IMR-90 (cell line): ENCODE measurements at regions of chr17 and their contacts with region 1.

Region 1: DNA sequence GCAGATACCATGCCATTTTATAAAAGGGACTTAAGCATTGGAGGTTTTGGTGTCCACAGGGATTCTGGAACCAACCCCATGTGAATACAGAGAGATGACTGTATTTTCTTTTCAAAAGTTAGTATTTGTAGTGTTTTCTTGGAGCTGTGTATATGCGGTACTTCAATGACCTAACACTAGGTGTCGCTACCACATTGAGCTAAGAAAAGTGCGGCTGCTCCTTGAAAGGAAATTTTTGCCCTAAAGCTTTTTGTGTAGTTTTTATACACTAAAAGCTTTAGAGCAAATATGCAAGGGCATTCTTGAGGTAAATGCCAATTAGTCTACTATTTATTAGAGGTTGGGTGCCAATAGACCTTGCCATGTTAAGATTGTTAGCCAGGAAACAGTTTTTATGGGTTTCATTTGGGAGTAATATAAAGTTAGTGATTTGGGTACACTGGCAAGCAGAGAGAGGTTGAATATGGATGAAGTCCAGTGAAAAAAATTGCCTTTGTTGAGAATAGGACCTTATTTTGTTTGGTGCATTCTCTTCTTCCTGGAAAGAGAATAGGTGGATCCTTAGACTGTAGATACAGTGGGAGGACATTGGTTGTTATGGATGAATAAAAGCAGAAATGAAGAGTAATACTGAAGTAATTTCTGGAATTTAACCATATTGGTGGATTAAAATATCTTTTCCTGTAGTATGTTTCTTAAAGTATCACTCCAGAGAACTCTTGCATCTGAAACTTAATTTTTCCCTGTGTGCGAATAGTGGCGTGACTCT is 43.3 kb downstream of the BCAS3 start:
- DNase-seq: peak; percentile 81
- ATAC-seq: peak; percentile 90
- H3K4me3 ChIP-seq: no peak overlapping the region
- H3K27ac ChIP-seq: no peak overlapping the region
- H3K4me1 ChIP-seq: peaks cover 3% of the 10 kb centered on the region; the same call in 1 of the 2 replicates
- H3K27me3 ChIP-seq: no peaks in the 10 kb centered on the region
- CTCF ChIP-seq: peak; percentile 86
- POLR2A ChIP-seq: peak; percentile 31; the same call in 1 of the 2 replicates
- RAD21 ChIP-seq: peak; percentile 94

Region 2: DNA sequence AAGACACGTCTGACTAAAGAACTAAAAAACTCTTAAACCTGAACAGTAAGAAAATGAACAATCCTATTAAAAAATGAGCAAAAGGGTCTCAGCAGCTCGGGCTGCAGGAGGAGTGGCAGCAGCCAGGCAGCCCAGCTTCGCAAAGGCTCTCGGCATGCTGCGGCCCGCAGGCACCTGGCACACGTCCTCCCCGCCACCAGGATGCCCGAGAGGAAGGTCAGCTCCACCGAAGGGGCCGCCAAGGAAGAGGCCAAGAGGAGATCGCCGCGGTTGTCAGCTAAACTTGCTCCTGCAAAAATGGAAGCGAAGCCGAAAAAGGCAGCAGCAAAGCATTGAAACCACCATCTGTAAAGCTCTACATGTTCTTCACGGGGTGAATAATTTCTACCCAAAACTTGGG is 130.2 kb after region 1 on chr17:
- CTCF ChIA-PET with region 1: no interaction called
- POLR2A ChIA-PET with region 1: no interaction called
- dilution Hi-C with region 1: no loop called
- in situ Hi-C with region 1: no loop called
- intact Hi-C with region 1: loop called (anchors 10 kb)
- DNase-seq: no peak
- ATAC-seq: no peak
- H3K4me3 ChIP-seq: no peak overlapping the region
- H3K27ac ChIP-seq: no peak overlapping the region
- H3K4me1 ChIP-seq: no peaks in the 10 kb centered on the region
- H3K27me3 ChIP-seq: no peaks in the 10 kb centered on the region
- CTCF ChIP-seq: no peak
- POLR2A ChIP-seq: no peak
- RAD21 ChIP-seq: no peak

Region 3: DNA sequence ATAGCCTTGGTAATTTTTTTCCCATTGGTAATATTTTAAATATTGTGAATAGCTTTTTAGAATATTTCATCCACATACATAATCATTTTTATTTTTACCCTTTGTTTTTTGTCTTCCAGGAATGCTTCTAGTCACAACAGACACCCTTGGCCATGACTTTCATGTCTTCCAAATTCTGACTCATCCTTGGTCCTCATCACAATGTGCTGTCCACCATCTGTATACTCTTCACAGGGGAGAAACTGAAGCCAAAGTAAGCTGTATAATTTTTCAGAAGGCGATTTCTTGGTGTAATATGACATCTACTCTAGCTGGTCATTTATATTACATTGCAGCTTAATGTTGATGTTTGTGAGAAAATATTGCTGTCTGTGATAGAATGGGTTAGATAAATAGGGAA is 226.2 kb after region 1 on chr17:
- CTCF ChIA-PET with region 1: no interaction called
- POLR2A ChIA-PET with region 1: no interaction called
- dilution Hi-C with region 1: no loop called
- in situ Hi-C with region 1: no loop called
- intact Hi-C with region 1: no loop called
- DNase-seq: peak; percentile 86
- ATAC-seq: peak; percentile 75
- H3K4me3 ChIP-seq: no peak overlapping the region
- H3K27ac ChIP-seq: no peak overlapping the region
- H3K4me1 ChIP-seq: peaks cover 3% of the 10 kb centered on the region
- H3K27me3 ChIP-seq: no peaks in the 10 kb centered on the region
- CTCF ChIP-seq: no peak
- POLR2A ChIP-seq: no peak
- RAD21 ChIP-seq: no peak

Region 4: DNA sequence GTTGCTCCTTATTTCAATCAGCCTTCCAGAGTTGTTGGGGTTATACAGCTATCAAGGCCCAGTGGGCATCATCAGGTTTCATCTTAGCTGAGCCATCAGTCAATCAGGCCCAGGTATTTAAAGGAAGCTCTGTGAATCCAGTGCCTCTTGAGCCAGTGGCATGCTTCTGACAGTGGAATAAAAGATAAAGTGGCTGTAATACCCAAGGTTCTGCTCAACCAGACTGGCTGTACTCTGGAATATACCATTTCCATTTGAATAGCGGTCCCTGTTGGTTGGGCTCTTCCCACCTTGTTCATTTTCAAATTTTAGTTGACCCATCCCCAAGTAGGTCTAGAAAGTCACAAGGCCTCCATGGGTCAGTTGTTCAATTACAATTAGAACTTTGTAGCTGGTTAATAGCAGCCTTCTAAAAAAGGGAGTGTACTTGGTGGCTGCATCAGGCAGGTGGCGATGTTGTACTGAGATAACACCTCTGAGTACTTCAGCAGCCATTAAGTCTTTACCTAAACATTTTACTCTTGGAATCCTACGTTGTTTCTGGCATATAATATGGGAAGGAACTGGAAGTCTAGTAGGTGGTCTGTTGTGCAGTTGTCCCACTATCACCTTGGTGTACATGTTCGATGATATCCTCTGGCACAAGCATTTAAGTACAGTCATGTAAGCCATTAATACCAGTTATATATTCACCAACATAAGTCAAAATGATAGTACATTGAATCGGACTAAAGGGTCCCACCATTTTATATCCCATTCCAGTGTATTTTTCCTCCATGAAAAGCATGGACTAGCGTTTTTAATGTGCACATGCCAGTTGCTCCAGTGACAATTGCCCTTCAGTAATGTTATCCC is 250.8 kb after region 1 on chr17:
- CTCF ChIA-PET with region 1: interaction called, 4 read pairs
- POLR2A ChIA-PET with region 1: interaction called, 3 read pairs
- dilution Hi-C with region 1: no loop called
- in situ Hi-C with region 1: loop called (anchors 10 kb)
- intact Hi-C with region 1: loop called (anchors 2 kb)
- DNase-seq: peak; percentile 80
- ATAC-seq: peak; percentile 99
- H3K4me3 ChIP-seq: no peak overlapping the region
- H3K27ac ChIP-seq: no peak overlapping the region
- H3K4me1 ChIP-seq: no peaks in the 10 kb centered on the region
- H3K27me3 ChIP-seq: no peaks in the 10 kb centered on the region
- CTCF ChIP-seq: peak; percentile 86
- POLR2A ChIP-seq: no peak
- RAD21 ChIP-seq: peak; percentile 90

Region 5: GRCh38 chr17:61157246-61157886 is 436.4 kb after region 1 on chr17:
- CTCF ChIA-PET with region 1: no interaction called
- POLR2A ChIA-PET with region 1: no interaction called
- dilution Hi-C with region 1: no loop called
- in situ Hi-C with region 1: no loop called
- intact Hi-C with region 1: loop called (anchors 10 kb)
- DNase-seq: peak; percentile 71
- ATAC-seq: peak; percentile 80
- H3K4me3 ChIP-seq: peak overlapping the region; percentile 24; the same call in 1 of the 2 replicates
- H3K27ac ChIP-seq: peak overlapping the region; percentile 91; the same call in 1 of the 2 replicates
- H3K4me1 ChIP-seq: peaks cover 9% of the 10 kb centered on the region
- H3K27me3 ChIP-seq: no peaks in the 10 kb centered on the region
- CTCF ChIP-seq: 0 out of 2 replicates have a peak, but pooled peaks have one; percentile 12
- POLR2A ChIP-seq: no peak
- RAD21 ChIP-seq: peak; percentile 36

Region 6: DNA sequence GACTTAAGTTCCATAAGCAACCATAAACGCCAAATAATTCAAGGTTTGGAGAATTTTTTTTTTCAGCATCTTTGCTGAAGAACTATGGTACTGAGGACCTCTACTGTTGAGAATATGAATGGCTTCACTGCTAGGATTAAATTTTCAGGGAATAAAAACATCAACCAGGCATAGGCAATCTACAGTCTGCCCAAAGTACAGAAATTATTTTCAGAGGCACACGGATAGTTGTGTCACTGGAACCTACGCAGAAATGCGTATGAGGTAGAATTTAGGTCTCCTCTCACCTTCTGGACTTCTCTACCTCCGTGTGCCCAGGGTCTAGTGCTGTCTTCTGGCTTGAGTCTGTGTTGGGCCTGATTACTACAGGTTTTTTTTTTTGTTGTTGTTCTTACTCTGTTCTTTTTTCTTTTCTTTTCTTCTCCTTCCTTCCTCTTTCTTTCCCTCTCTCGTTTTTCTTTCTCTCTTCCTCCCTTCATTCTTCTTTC is 830.4 kb after region 1 on chr17:
- CTCF ChIA-PET with region 1: no interaction called
- POLR2A ChIA-PET with region 1: no interaction called
- dilution Hi-C with region 1: no loop called
- in situ Hi-C with region 1: no loop called
- intact Hi-C with region 1: loop called (anchors 10 kb)
- DNase-seq: peak; percentile 67
- ATAC-seq: peak; percentile 81
- H3K4me3 ChIP-seq: no peak overlapping the region
- H3K27ac ChIP-seq: no peak overlapping the region
- H3K4me1 ChIP-seq: no peaks in the 10 kb centered on the region; the same call in 1 of the 2 replicates
- H3K27me3 ChIP-seq: peaks cover 5% of the 10 kb centered on the region
- CTCF ChIP-seq: peak; percentile 88
- POLR2A ChIP-seq: no peak
- RAD21 ChIP-seq: peak; percentile 87